Calu3 (cell line): ENCODE measurements at regions of chr6 and their contacts with region 1.

Region 1: GRCh38 chr6:10976571-10976970 is 67.5 kb downstream of the ELOVL2 start:
- DNase-seq: no peak
- H3K4me3 Mint-ChIP-seq: no peak overlapping the region
- H3K27ac Mint-ChIP-seq: no peak overlapping the region
- H3K4me1 Mint-ChIP-seq: no peaks in the 10 kb centered on the region
- H3K27me3 Mint-ChIP-seq: no peaks in the 10 kb centered on the region
- CTCF ChIP-seq: no peak

Region 2: DNA sequence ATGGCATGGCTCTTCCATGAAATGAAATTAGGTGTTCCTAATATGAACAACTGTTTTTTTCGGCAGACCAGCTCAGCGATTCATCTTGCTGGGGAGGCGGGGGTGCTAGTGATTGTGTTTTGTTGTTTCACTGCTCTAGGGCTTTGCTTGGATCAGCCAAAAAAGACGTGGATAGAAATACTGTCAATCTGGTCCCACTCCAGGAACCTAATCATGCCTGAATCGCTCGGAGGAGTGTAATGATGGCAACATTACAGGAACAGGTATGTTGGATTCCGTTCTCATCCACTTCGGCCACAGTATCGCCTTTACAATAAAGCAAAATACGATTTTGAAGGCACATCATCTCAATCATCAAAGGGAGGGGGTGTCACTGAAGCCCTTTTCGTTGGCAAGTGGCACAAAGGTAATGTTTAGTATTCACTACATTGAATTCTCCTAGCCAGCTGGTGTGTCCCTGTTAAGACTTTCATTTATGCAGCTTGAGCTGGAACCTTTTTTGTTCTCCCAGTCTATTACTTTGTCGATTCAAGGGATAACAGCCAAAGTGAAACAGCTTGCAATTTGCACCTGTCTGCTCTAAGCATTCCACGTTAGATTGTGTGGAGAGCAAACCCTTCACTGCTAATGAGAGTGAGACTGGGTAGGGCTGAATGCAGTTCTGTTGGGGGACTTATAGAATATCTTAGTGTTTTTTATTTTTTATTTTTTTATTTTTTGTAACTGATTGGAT is 1039.4 kb before region 1 on chr6:
- CTCF ChIA-PET with region 1: interaction called, 11 read pairs
- intact Hi-C with region 1: no loop called
- DNase-seq: no peak
- H3K4me3 Mint-ChIP-seq: no peak overlapping the region
- H3K27ac Mint-ChIP-seq: no peak overlapping the region
- H3K4me1 Mint-ChIP-seq: no peaks in the 10 kb centered on the region
- H3K27me3 Mint-ChIP-seq: no peaks in the 10 kb centered on the region
- CTCF ChIP-seq: no peak

Region 3: GRCh38 chr6:10505529-10505928 is 471.0 kb before region 1 on chr6:
- CTCF ChIA-PET with region 1: no interaction called
- intact Hi-C with region 1: no loop called
- DNase-seq: no peak
- H3K4me3 Mint-ChIP-seq: no peak overlapping the region
- H3K27ac Mint-ChIP-seq: no peak overlapping the region
- H3K4me1 Mint-ChIP-seq: peaks cover 6% of the 10 kb centered on the region
- H3K27me3 Mint-ChIP-seq: no peaks in the 10 kb centered on the region
- CTCF ChIP-seq: no peak

Region 4: GRCh38 chr6:11050731-11051130 is 74.2 kb after region 1 on chr6:
- CTCF ChIA-PET with region 1: no interaction called
- intact Hi-C with region 1: no loop called
- DNase-seq: no peak
- H3K4me3 Mint-ChIP-seq: no peak overlapping the region
- H3K27ac Mint-ChIP-seq: no peak overlapping the region
- H3K4me1 Mint-ChIP-seq: peaks cover 18% of the 10 kb centered on the region
- H3K27me3 Mint-ChIP-seq: no peaks in the 10 kb centered on the region
- CTCF ChIP-seq: no peak